Right cardiac atrium (tissue), 5 donors: ENCODE measurements at regions of chr11 and their contacts with region 1.

Region 1: DNA sequence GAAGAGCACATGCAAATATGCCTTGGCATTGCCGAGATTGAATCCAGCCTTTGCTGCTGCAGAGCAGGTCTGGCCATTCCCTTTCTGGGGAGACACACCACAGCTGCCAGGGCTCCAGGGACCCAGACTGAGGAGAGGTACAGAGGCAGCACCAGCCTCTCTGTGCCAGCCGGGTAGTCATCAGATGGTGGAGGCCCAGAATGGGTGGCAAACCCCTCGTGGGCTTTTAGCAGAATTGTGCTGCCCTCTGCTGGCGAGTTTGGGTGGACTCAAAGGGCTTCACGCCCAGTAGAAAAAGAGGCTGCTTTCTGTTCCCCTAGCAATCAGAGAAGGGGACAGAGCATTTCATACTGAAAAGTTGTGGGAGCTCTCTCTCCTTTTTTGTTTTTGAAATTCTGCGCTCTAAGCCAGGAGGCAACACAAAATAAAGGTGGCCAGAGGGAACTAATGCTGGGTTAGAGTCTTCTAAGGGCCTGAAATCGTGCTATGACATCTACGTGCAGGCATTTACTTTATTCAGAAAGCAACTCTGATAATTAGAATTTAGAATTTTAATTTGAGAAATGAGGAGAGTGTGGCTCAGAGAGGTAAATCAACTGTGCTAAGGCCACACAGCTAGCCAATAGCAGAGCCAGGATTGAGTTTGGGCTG is 158.8 kb upstream of the NAV2 start:
- DNase-seq: peak; percentile 83 to 93 (median 90)
- ATAC-seq: peak; percentile 73 to 79
- H3K4me3 ChIP-seq: no peak overlapping the region
- H3K27ac ChIP-seq: no peak overlapping the region
- H3K4me1 ChIP-seq: no peaks in the 10 kb centered on the region
- H3K27me3 ChIP-seq: no peaks in the 10 kb centered on the region

Region 2: GRCh38 chr11:19071255-19071654 is 482.6 kb before region 1 on chr11:
- intact Hi-C with region 1: loop called (anchors 2 to 10 kb)
- DNase-seq: peak; percentile 70 to 87 (median 83)
- ATAC-seq: peak; percentile 90 to 94
- H3K4me3 ChIP-seq: no peak overlapping the region
- H3K27ac ChIP-seq: no peak overlapping the region
- H3K4me1 ChIP-seq: no peaks in the 10 kb centered on the region
- H3K27me3 ChIP-seq: no peaks in the 10 kb centered on the region

Region 3: GRCh38 chr11:19076744-19077589 is 476.8 kb before region 1 on chr11:
- intact Hi-C with region 1: loop called in 3 of 4 experiments (anchors 5 to 10 kb)
- DNase-seq: peak; percentile 32 to 71 (median 64)
- ATAC-seq: peak; percentile 50 to 65
- H3K4me3 ChIP-seq: no peak overlapping the region
- H3K27ac ChIP-seq: no peak overlapping the region
- H3K4me1 ChIP-seq: no peaks in the 10 kb centered on the region
- H3K27me3 ChIP-seq: no peaks in the 10 kb centered on the region

Region 4: DNA sequence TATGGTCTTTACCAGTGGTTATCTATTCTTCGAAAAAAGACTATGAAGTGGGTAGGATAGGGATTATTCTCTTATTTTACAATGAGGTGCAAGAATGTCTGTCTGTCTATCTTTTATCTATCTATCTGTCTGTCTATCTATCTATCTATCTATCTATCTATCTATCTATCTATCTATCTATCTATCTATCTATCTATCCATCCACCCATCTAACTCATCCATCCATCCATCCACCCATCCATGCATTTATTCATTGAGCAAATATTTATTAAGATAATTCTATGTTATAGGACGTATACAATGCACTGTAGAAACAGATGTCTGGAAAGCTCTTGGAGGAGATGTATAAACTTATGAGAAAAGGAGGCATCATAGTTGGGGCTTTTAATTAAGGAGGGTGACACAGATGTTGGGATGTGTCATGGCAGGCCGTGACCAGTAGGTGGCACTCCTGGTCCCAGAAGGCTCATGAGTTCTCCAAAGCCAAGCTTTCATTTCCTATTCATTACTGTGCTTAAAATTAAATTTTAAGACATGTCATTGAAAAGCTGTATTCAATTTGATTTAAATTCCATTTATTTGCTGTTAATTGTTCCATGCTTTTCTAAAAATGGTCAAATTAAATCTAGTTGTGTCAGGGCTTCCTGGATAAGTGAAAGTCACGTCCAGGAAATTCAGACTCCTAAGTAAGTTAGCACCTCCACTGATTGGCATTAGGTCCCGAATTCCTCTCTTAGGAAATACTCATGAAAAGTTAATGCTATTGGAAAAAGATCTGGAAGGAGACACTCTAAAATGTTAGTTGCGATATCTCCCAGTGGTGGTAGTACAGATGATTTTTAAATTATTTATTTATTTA is 294.1 kb before region 1 on chr11:
- intact Hi-C with region 1: loop called in 3 of 4 experiments (anchors 5 to 10 kb)
- DNase-seq: peak; percentile 67 to 90 (median 87)
- ATAC-seq: peak; percentile 60 to 73
- H3K4me3 ChIP-seq: no peak overlapping the region
- H3K27ac ChIP-seq: no peak overlapping the region
- H3K4me1 ChIP-seq: no peaks in the 10 kb centered on the region
- H3K27me3 ChIP-seq: no peaks in the 10 kb centered on the region

Region 5: DNA sequence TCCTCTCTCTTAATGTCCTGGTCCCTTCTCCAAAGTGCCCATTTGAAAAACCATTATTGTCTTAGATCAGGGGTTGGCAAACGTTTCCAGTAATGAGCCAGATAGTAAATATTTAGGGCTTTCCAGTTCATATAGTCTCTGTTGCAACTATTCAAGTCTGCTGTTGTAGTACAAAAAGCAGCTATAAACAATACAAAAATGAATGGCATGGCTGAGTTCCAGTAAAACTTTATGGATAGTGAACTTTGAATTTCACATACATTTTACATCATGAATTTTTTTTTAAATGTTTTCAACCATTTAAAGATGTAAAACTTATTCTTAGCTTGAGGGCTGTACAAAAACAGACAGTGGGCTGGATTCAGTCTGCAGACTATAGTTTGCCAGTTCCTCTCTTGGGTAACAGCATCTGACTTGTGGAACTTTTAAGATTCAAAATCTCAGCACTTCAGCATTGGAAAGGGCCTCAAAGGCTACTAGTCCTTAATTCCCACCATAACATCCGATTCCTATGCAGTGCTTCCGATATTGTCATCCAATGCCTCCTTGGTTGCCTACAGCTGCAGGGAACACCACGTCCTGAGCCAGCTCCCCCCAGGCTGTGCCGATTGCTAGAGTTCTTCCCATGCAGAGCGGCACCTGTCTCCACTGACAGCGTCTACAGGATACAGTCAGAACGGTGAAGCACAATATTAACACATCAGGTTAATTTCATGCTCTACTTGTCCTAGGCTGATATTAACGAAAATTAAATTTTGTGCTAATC is 247.4 kb before region 1 on chr11:
- intact Hi-C with region 1: loop called (anchors 2 to 5 kb)
- DNase-seq: no peak
- ATAC-seq: no peak
- H3K4me3 ChIP-seq: no peak overlapping the region
- H3K27ac ChIP-seq: no peak overlapping the region
- H3K4me1 ChIP-seq: no peaks in the 10 kb centered on the region
- H3K27me3 ChIP-seq: no peaks in the 10 kb centered on the region

Region 6: DNA sequence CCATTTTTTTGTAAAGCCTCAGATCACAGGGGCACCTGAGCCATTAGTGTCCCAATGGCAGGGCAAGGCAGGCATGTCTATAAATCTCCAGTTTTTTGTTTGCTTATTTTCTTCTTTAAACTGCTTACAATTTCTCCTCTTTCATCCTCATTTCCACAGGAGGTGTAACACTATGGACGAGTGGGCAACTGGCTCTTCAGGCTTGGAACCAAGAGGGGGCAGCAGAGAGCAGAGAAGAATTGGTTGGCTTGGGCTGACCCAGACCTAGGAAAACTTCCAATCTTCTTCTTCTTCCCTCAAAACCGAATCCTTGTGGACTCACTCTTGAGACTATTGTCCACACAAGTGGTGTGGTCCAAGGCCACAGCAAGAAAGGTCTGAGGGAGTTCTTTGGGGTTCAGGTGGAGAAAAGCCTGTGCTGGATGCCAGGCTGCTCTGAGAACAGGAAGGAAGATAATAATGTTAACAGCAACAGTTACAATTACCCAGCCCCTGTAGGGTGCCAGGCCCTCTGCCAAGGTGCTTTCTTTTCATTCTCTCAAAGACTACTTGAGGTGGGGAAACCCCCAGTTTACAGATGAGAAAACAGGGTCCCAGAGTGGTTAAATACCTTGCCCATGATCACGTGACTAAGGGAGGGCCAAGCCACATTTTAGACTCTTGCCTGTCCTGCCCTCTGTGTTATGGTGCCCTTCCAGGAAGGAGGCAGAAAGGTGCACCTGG is 242.3 kb before region 1 on chr11:
- intact Hi-C with region 1: loop called (anchors 2 to 5 kb)
- DNase-seq: peak; percentile 67 to 85 (median 73)
- ATAC-seq: peak; percentile 85 to 86
- H3K4me3 ChIP-seq: no peak overlapping the region
- H3K27ac ChIP-seq: no peak overlapping the region
- H3K4me1 ChIP-seq: no peaks in the 10 kb centered on the region
- H3K27me3 ChIP-seq: no peaks in the 10 kb centered on the region

Region 7: GRCh38 chr11:19769820-19770219 is 216.0 kb after region 1 on chr11:
- intact Hi-C with region 1: no loop called
- DNase-seq: no peak
- ATAC-seq: no peak
- H3K4me3 ChIP-seq: no peak overlapping the region
- H3K27ac ChIP-seq: no peak overlapping the region
- H3K4me1 ChIP-seq: peaks cover 9% of the 10 kb centered on the region
- H3K27me3 ChIP-seq: no peaks in the 10 kb centered on the region